ENCODE measurements at regions of chr11 and their contacts with region 1.

Region 1: DNA sequence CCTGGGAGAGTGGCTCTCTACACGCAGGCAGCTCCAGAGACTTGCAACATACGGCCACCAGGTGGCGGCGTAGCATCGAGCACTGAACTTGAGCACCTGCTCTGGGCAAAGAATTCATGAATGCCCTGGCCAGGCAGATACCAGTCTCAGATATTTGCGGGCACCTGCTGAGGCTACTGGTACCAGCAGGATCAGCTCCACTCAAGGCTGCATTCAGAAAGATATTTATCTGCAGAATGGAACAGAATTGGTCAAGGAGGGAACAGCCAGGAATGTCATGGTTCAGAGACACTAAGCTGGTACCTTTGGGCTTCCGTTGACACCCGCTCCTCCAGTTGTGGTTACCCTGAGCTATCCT is 10.8 kb upstream of the CCDC86 start:
- DNase-seq: peak; percentile 76 to 84
- H3K4me3 ChIP-seq: no peak overlapping the region
- H3K27ac ChIP-seq: no peak overlapping the region
- H3K4me1 ChIP-seq: no peaks in the 10 kb centered on the region
- H3K27me3 ChIP-seq: no peaks in the 10 kb centered on the region
- CTCF ChIP-seq: peak; percentile 76 to 94 (median 91)
- POLR2A ChIP-seq: no peak

Region 2: DNA sequence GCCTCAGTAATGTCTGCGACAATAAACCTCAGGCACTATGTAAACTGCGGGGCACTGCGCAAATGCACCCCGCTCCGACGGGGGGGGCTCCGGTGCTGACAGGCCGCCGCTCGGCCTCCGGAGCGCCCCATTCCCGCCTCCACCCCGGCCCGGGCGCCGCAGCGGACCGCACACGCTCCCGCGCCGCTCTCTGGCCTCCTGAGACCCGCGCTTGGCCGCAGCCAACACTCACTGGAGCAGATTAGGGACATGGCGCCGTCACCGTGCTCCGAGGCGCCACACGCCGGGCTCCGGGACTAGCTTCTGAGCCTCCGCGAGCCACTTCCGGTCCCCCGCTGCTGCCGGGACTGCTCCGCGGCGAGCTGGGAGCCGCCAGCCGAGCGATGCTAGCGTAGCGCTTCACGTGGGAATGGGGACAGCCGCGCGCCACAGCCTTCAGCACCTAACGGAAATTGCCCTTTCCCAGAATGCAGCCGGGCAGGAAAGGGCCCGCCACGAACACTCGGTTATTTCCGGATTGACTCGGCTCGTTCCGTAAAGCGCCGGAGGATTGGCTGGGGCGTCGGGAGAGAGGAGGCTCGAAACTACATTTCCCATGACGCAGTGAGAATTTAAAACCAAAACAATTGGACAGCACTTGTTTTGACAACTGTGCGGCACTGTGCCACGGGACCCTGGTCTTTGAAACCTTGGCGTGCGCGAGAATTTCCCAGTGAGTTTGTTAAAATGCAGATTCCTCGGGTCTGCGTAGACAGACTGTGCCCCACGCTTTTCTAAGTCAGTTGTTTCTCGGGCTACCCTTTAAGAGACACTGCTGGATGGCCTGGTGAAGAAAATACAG is 75.2 kb after region 1 on chr11 and contains the start of gene PRPF19:
- intact Hi-C with region 1: loop called (anchors 10 kb)
- DNase-seq: peak; percentile 96
- H3K4me3 ChIP-seq: peak within 1 kb of the TSS; percentile 80 to 100 (median 91)
- H3K27ac ChIP-seq: peak within 1 kb of the TSS; percentile 96 to 97
- H3K4me1 ChIP-seq: peaks cover 0 to 16% of the 10 kb centered on the region in 2 donors
- H3K27me3 ChIP-seq: no peaks in the 10 kb centered on the region
- CTCF ChIP-seq: no peak
- POLR2A ChIP-seq: peak; percentile 67
- total RNA-seq, gene PRPF19: 56.0 to 82.7 (median 81.3) TPM

Region 3: GRCh38 chr11:61004180-61004611 is 173.1 kb after region 1 on chr11:
- intact Hi-C with region 1: no loop called
- DNase-seq: no peak
- H3K4me3 ChIP-seq: no peak overlapping the region
- H3K27ac ChIP-seq: no peak overlapping the region
- H3K4me1 ChIP-seq: peaks cover 0 to 5% of the 10 kb centered on the region in 2 donors
- H3K27me3 ChIP-seq: no peaks in the 10 kb centered on the region
- CTCF ChIP-seq: no peak
- POLR2A ChIP-seq: no peak

Measured in breast epithelium (tissue), 4 donors.